ENCODE measurements at regions of chr18 and their contacts with region 1.

Region 1: GRCh38 chr18:27636576-27637085 is 451.5 kb upstream of the CHST9 start:
- DNase-seq: peak; percentile 77
- H3K4me3 ChIP-seq: no peak overlapping the region
- H3K27ac ChIP-seq: no peak overlapping the region
- H3K4me1 ChIP-seq: peaks cover 3% of the 10 kb centered on the region
- H3K27me3 ChIP-seq: peaks cover 44% of the 10 kb centered on the region
- CTCF ChIP-seq: no peak

Region 2: GRCh38 chr18:27577752-27578151 is 58.9 kb before region 1 on chr18:
- CTCF ChIA-PET with region 1: no interaction called
- POLR2A ChIA-PET with region 1: no interaction called
- intact Hi-C with region 1: loop called (anchors 10 kb)
- DNase-seq: no peak
- H3K4me3 ChIP-seq: no peak overlapping the region
- H3K27ac ChIP-seq: no peak overlapping the region
- H3K4me1 ChIP-seq: no peaks in the 10 kb centered on the region
- H3K27me3 ChIP-seq: no peaks in the 10 kb centered on the region
- CTCF ChIP-seq: no peak

Region 3: DNA sequence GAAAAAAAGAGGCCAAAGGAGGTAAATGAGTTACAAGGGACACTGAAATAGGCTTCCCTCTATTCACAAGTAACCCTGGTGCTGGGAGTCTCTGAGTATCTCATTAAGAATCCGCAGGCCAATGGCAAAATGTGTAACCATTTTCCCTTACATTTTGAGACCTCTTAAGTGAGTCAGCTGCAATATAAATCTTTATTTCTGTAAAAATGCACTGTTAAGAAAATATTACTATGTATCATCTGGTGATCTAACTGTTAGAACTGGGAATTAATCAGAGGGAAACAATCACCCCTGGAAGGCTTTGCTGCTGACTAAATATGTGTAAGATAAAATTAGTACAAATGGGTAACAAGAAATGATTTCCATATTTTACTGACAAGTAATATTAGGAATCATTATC is 31.5 kb after region 1 on chr18:
- CTCF ChIA-PET with region 1: no interaction called
- POLR2A ChIA-PET with region 1: no interaction called
- intact Hi-C with region 1: no loop called
- DNase-seq: no peak
- H3K4me3 ChIP-seq: no peak overlapping the region
- H3K27ac ChIP-seq: no peak overlapping the region
- H3K4me1 ChIP-seq: no peaks in the 10 kb centered on the region
- H3K27me3 ChIP-seq: peaks cover 7% of the 10 kb centered on the region
- CTCF ChIP-seq: no peak

Measured in A673 (cell line).